ENCODE measurements at regions of chr17 and their contacts with region 1.

Region 1: GRCh38 chr17:49567871-49568694 is 7.6 kb upstream of the NXPH3 start:
- DNase-seq: peak; percentile 81
- ATAC-seq: peak; percentile 74
- H3K4me3 ChIP-seq: 0 out of 4 replicates have a peak overlapping the region, but pooled peaks of 1 of the 2 experiments have one; percentile 2
- H3K27ac ChIP-seq: no peak overlapping the region
- H3K4me1 ChIP-seq: peaks cover 0 to 17% of the 10 kb centered on the region in 2 experiments; a peak in 3 of 4 replicates
- H3K27me3 ChIP-seq: peaks cover 5% of the 10 kb centered on the region; the same call in 1 of the 2 replicates
- CTCF ChIP-seq: peak; percentile 98 to 99 (median 99)
- POLR2A ChIP-seq: no peak
- RAD21 ChIP-seq: peak; percentile 100

Region 2: GRCh38 chr17:49468811-49469385 is 99.2 kb before region 1 on chr17:
- CTCF ChIA-PET with region 1: no interaction called
- POLR2A ChIA-PET with region 1: no interaction called
- RAD21 ChIA-PET with region 1: no interaction called
- intact Hi-C with region 1: no loop called
- DNase-seq: no peak
- ATAC-seq: no peak
- H3K4me3 ChIP-seq: no peak overlapping the region
- H3K27ac ChIP-seq: no peak overlapping the region
- H3K4me1 ChIP-seq: peaks cover 0 to 3% of the 10 kb centered on the region in 2 experiments; a peak in 1 of 4 replicates
- H3K27me3 ChIP-seq: no peaks in the 10 kb centered on the region; the same call in 1 of the 2 replicates
- CTCF ChIP-seq: no peak
- POLR2A ChIP-seq: no peak
- RAD21 ChIP-seq: no peak

Region 3: DNA sequence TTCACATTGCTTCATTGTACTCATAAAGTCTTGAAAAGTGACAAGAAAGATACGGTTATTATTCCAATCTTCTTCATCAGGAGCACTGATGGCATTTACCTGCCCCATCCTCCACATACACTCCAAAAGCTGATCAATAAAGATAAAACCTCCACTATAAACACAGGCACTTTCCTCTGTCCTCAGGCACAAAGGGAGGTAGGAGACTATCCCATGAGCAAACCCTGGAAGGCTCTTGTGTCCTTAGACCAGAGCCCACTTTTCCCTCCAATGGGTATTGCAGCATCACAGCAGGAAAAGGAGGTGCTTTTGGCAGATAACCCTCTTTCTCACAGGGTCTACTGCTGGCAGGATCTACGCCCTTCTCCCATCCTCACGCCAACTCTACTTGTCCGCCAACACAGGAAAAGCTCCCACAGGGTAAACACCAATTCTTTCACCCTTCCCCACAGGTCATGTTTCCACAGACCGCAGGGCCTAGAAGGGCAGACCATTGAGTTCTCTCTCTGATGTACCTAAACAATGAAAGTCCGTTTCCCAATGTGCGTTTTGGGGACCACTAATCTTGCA is 36.3 kb after region 1 on chr17:
- CTCF ChIA-PET with region 1: no interaction called
- POLR2A ChIA-PET with region 1: no interaction called
- RAD21 ChIA-PET with region 1: no interaction called
- intact Hi-C with region 1: no loop called
- DNase-seq: no peak
- ATAC-seq: no peak
- H3K4me3 ChIP-seq: no peak overlapping the region
- H3K27ac ChIP-seq: no peak overlapping the region
- H3K4me1 ChIP-seq: no peaks in the 10 kb centered on the region
- H3K27me3 ChIP-seq: no peaks in the 10 kb centered on the region
- CTCF ChIP-seq: no peak
- POLR2A ChIP-seq: no peak
- RAD21 ChIP-seq: no peak

Region 4: DNA sequence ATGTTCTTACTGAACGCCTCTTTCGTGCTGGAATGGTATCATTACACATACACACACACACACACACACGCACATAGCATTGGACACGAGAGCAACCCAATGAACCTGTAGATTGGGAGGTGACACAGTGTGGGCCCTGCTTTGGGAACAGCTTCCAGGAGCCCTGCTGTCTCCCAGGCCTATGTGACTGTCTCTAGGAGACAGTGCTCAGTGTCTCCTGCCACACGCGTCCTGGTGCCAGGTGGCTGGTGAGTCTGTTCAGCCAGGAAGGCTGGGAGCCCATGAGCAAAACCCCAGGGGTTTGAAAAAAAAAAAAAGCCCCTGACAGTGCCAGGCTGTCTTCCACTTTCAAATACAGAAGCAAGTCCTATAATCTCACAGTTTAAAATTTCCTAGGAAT is 112.2 kb after region 1 on chr17:
- CTCF ChIA-PET with region 1: interaction called, 10 read pairs
- POLR2A ChIA-PET with region 1: no interaction called
- RAD21 ChIA-PET with region 1: interaction called in 1 of 2 experiments, 5 read pairs
- intact Hi-C with region 1: no loop called
- DNase-seq: no peak
- ATAC-seq: no peak
- H3K4me3 ChIP-seq: no peak overlapping the region
- H3K27ac ChIP-seq: no peak overlapping the region
- H3K4me1 ChIP-seq: peaks cover 4 to 17% of the 10 kb centered on the region in 2 experiments; a peak in 3 of 4 replicates
- H3K27me3 ChIP-seq: no peaks in the 10 kb centered on the region
- CTCF ChIP-seq: no peak
- POLR2A ChIP-seq: no peak
- RAD21 ChIP-seq: no peak

Region 5: GRCh38 chr17:49699966-49700575 is 132.0 kb after region 1 on chr17:
- CTCF ChIA-PET with region 1: interaction called, 92 read pairs
- POLR2A ChIA-PET with region 1: interaction called, 4 read pairs
- RAD21 ChIA-PET with region 1: interaction called, 7 to 10 read pairs
- intact Hi-C with region 1: loop called (anchors 1 kb)
- DNase-seq: no peak
- ATAC-seq: no peak
- H3K4me3 ChIP-seq: no peak overlapping the region
- H3K27ac ChIP-seq: no peak overlapping the region
- H3K4me1 ChIP-seq: no peaks in the 10 kb centered on the region
- H3K27me3 ChIP-seq: no peaks in the 10 kb centered on the region
- CTCF ChIP-seq: no peak
- POLR2A ChIP-seq: no peak
- RAD21 ChIP-seq: no peak

Region 6: DNA sequence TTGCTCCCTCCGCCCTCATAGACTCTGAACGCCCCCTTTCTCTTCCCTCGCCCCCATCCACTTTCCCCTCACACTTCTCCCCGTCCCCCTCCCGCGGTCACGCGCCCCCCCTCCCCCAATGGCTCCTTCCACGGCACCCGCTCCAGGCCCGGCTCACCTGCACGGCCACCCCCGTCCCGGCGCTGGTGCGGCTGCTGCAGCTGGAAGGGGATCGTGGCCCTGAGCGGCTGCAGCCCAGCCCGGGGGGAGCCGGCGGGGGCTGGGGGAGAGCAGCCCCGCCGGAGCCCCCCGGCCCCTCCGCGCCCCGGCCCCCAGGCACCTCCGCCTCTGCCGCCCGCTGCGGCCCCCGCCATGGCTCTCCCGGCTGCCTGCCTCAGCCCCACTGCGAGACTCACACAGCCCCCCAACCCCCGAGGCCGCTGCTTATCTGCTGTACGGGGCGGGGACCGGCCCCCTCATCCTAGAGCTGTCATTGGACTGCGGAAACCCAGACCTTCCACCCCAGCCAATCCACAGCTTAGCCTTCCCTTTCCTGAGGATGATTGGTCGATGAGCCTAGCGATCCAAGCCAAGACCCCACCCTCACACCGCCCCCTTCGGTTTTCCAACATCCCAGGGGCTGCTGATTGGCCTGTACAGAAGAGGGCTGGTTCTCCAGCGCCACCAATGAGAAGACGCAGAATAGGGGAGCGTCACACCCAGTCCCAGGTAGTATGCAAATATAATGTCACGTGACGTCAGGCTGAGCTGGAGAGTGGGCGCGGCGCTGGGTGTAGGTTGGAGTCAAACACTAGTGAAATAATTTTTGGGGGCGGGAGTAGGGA is 195.9 kb after region 1 on chr17 and contains the start of gene FAM117A:
- CTCF ChIA-PET with region 1: interaction called, 11 read pairs
- POLR2A ChIA-PET with region 1: no interaction called
- RAD21 ChIA-PET with region 1: no interaction called
- intact Hi-C with region 1: no loop called
- DNase-seq: peak; percentile 100
- ATAC-seq: peak; percentile 97
- H3K4me3 ChIP-seq: peak within 1 kb of the TSS; percentile 58 to 61
- H3K27ac ChIP-seq: no peak within 1 kb of the TSS; the same call in 1 of the 2 replicates
- H3K4me1 ChIP-seq: peaks cover 8 to 12% of the 10 kb centered on the region in 2 experiments
- H3K27me3 ChIP-seq: peaks cover 17% of the 10 kb centered on the region
- CTCF ChIP-seq: no peak
- POLR2A ChIP-seq: peak; percentile 74
- RAD21 ChIP-seq: no peak
- total RNA-seq, gene FAM117A: 12.8 TPM

Region 7: DNA sequence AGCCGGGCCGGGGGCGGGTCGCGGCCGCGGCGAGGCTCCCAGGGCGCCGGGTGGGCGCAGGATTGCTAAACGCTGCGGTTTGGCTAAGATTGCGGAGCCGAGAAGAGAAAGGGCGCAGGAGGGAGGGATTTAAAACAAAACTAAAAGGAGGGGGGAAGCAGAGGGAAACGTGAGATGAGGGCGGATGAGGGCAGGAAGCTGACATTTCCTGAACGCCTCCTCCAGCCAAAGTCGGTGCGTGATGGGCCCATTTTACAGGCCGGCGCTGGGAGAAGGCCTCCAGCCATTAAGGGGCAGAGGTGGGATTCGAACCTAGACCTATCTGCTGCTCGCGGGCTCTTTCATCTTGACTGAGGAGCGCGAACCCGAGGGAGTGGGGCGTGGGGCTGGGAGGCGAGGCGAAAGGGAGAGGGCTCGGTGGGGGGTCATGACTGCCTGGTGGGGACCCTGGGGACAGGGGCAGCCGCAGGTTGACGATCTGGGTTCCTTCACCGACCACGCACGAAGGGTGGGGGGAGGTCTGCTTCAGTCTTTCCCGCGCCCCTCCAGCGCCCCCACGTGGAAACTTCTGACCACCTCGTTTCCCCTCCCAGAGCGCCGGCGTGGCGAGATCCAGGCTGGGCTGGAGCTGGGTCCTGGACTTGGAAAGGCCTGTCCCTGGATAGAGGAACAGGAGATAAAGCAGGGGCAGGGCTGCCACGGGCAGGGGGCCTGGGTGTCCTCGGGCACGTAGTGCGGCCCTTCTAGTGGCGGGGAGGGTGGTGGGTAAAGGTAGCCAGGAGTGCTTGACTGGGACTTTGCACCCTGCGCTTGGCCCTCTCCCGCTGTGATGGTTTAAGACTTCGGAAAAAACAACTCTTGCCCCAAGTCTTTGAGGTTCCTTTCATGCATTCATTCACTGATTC is 283.6 kb after region 1 on chr17:
- CTCF ChIA-PET with region 1: interaction called, 4 read pairs
- POLR2A ChIA-PET with region 1: no interaction called
- RAD21 ChIA-PET with region 1: interaction called in 1 of 2 experiments, 3 read pairs
- intact Hi-C with region 1: loop called (anchors 1 kb)
- DNase-seq: no peak
- ATAC-seq: peak; percentile 88
- H3K4me3 ChIP-seq: peak overlapping the region; percentile 35 to 52
- H3K27ac ChIP-seq: no peak overlapping the region
- H3K4me1 ChIP-seq: peaks cover 0 to 8% of the 10 kb centered on the region in 2 experiments; a peak in 2 of 4 replicates
- H3K27me3 ChIP-seq: no peaks in the 10 kb centered on the region
- CTCF ChIP-seq: peak; percentile 58 to 82 (median 77)
- POLR2A ChIP-seq: no peak
- RAD21 ChIP-seq: peak; percentile 63